ENCODE measurements at regions of chr4 and their contacts with region 1.

Region 1: DNA sequence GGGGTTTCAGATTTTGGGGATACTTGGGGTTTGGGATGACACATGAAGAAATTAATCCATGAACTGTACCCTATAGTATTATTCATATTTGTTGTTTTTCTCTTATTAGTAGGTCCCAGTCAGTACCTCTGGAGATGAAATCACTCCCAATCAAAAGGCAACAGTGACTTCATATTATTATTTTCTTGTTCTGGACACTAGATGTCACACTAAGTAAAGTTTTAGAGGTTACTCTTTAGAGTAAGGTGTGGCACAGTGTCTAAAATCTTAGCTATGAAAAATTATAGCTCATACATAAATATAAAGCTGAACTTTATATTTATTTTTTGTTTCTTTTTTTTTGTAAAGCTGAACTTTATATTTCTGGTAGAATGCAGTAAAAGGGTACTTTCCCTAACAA is 35.1 kb downstream of the FAM114A1 start:
- DNase-seq: no peak
- H3K4me3 Mint-ChIP-seq: no peak overlapping the region
- H3K27ac Mint-ChIP-seq: no peak overlapping the region
- H3K4me1 Mint-ChIP-seq: peaks cover 9% of the 10 kb centered on the region
- H3K27me3 Mint-ChIP-seq: peaks cover 3% of the 10 kb centered on the region

Region 2: DNA sequence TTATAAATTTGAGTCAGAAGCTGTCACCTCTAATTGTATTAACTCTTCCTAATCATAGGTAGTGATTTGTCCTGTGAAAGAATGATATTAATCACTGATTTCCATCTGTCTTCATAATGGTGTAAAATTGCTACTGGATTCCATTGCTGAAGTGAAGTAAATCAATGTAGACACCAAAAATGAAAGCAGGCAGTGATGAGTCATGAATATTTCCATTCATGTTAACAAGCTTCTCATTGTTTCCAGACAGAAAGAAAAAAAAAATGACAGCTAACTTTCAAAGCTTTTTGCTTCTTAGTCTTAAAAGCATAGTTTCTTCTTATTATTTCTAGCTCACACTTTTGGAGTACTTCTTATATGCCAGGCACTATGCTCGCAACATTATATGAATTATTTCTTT is 13.6 kb before region 1 on chr4:
- CTCF ChIA-PET with region 1: interaction called, 13 read pairs
- POLR2A ChIA-PET with region 1: no interaction called
- intact Hi-C with region 1: no loop called
- DNase-seq: no peak
- H3K4me3 Mint-ChIP-seq: peak overlapping the region; percentile 48
- H3K27ac Mint-ChIP-seq: peak overlapping the region; percentile 81
- H3K4me1 Mint-ChIP-seq: peaks cover 22% of the 10 kb centered on the region
- H3K27me3 Mint-ChIP-seq: no peaks in the 10 kb centered on the region

Region 3: DNA sequence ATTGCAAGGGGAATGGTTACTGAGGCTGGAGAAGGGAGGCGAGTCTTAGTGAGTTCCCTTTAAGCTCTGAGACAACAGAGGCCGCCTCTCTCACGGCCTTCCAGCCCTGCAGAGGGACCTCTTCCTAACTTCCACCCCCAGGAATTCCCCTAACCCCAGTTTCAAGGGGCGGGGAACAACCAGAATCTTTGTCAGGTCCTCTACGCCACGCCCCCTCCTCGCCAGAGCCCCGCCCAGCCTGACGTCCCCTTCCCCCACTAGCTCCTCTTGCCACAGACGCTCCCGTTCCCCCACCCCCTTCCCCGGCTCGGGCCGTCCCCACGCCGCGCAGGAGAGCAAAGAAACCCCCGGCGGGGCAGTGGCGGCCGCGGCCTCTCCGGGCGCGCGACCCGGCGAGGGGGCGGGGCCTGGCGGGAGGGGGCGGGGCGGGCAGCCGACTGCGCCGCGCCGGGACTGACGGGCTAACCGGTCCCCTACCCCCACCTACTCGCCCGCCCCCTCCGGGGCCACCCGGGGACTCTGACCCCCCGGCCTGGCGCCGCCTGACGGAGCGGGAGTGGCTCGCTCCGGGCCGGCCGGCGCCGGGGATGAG is 141.8 kb after region 1 on chr4:
- CTCF ChIA-PET with region 1: interaction called, 14 read pairs
- POLR2A ChIA-PET with region 1: interaction called, 3 read pairs
- intact Hi-C with region 1: loop called (anchors 2 kb)
- DNase-seq: peak; percentile 99
- H3K4me3 Mint-ChIP-seq: peak overlapping the region; percentile 75
- H3K27ac Mint-ChIP-seq: peak overlapping the region; percentile 88
- H3K4me1 Mint-ChIP-seq: peaks cover 50% of the 10 kb centered on the region
- H3K27me3 Mint-ChIP-seq: no peaks in the 10 kb centered on the region

Region 4: GRCh38 chr4:39134683-39135319 is 232.1 kb after region 1 on chr4:
- CTCF ChIA-PET with region 1: interaction called, 205 read pairs
- POLR2A ChIA-PET with region 1: no interaction called
- intact Hi-C with region 1: loop called (anchors 1 kb)
- DNase-seq: no peak
- H3K4me3 Mint-ChIP-seq: no peak overlapping the region
- H3K27ac Mint-ChIP-seq: no peak overlapping the region
- H3K4me1 Mint-ChIP-seq: peaks cover 7% of the 10 kb centered on the region
- H3K27me3 Mint-ChIP-seq: no peaks in the 10 kb centered on the region

Region 5: GRCh38 chr4:39285111-39285795 is 382.6 kb after region 1 on chr4:
- CTCF ChIA-PET with region 1: no interaction called
- POLR2A ChIA-PET with region 1: no interaction called
- intact Hi-C with region 1: loop called (anchors 5 kb)
- DNase-seq: no peak
- H3K4me3 Mint-ChIP-seq: no peak overlapping the region
- H3K27ac Mint-ChIP-seq: peak overlapping the region; percentile 49
- H3K4me1 Mint-ChIP-seq: peaks cover 12% of the 10 kb centered on the region
- H3K27me3 Mint-ChIP-seq: no peaks in the 10 kb centered on the region